ENCODE measurements at regions of chr10 and their contacts with region 1.

Region 1: DNA sequence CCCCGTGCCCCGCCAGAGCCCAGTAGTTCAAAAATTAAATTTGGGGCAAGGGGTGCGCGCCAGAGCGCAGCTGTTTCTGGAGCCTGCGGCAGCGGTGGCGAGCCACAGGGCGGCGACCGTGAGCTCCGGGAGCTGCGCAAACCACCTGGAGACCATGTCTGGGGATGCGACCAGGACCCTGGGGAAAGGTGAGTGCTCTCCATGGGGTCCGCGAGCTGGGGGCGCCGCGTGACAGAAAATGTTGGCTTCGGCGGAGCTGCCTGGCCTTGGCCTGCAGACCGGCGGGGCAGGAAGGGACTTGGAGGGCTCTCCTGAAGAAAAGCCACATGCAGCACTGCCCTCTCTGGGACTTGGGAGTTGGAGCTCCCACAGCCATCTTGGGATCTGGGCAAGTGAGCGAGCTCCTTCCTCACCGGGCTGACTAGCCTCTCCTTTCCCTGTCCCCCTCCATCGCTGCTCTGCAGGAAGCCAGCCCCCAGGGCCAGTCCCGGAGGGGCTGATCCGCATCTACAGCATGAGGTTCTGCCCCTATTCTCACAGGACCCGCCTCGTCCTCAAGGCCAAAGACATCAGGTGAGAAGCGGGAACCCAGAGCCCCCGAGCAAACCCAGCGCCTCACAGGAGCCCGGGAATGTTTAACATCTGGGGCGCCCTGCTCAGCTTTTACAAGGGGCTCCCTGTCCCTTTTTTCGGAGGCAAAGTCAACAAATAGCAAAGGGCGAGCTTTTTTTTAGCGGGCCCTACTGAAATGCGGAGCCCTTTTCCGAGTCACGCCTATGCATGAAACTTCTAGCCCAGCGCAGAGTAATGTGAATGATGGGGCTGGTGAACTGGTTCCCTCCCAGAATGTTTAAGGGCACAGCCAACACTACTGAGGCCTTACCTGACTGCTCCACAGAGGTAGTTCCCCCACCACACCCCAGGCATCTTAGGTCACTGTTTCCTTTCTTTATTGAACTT is 6.1 kb downstream of the GSTO2 start:
- DNase-seq: peak in 3 of 5 donors; percentile 36 to 43 (median 40)
- H3K4me3 ChIP-seq: no peak overlapping the region
- H3K4me3 Mint-ChIP-seq: peak overlapping the region in 6 of 8 donors; percentile 10 to 71 (median 54)
- H3K27ac ChIP-seq: no peak overlapping the region
- H3K27ac Mint-ChIP-seq: peak overlapping the region in 1 of 7 donors; percentile 35
- H3K4me1 ChIP-seq: peaks cover 11% of the 10 kb centered on the region
- H3K4me1 Mint-ChIP-seq: no peaks in the 10 kb centered on the region
- H3K27me3 ChIP-seq: no peaks in the 10 kb centered on the region
- H3K27me3 Mint-ChIP-seq: peaks cover 9 to 10% of the 10 kb centered on the region in 2 donors

Region 2: DNA sequence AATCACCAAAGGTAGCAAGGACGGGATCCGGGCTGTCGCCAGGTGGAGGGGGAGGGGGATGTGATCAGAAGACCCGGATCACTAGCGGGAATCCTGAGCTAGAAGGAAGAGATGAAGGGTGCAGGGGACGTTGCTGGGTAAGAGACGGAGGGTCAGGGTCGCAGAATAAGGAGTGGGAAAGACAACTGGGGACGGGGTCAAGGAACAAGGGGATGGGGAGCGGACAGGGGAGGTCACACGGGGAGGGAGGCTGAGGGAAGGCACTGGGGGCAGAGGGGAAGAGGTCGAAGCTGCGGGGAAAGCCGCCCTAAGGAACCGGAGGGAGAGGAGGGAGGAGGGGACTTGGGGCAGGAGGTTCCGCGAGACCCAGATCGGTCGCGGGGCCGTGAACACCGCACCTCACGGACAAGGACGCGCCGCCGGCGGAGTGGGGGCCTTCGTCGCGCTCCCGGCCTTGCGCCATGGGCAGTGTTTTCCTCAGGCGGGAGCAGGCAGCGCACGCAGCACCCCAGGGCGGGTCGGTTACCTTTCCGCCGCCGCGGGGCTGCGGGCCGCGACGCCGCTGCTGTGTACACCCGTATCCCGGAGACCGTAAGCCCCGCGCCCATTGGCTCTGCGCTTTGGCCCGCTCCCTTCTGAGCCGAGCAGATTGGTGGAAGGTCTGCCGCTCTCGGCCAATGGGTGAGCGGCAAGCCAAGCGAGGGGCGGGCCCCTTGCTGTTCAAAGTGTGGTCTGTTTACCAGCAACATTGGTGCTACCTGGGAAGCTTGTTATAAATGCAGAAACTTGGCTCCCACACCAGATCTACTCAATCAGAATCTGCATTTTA is 43.0 kb before region 1 on chr10 and contains the start of gene CFAP43:
- CTCF ChIA-PET with region 1: interaction called, 20 read pairs
- POLR2A ChIA-PET with region 1: no interaction called
- intact Hi-C with region 1: no loop called
- DNase-seq: peak; percentile 99 to 100 (median 99)
- H3K4me3 ChIP-seq: peak within 1 kb of the TSS; percentile 57 to 64
- H3K4me3 Mint-ChIP-seq: peak within 1 kb of the TSS; percentile 84 to 94 (median 90)
- H3K27ac ChIP-seq: peak within 1 kb of the TSS; percentile 49
- H3K27ac Mint-ChIP-seq: peak within 1 kb of the TSS; percentile 82 to 96 (median 92)
- H3K4me1 ChIP-seq: peaks cover 6% of the 10 kb centered on the region
- H3K4me1 Mint-ChIP-seq: peaks cover 6 to 19% (median 11%) of the 10 kb centered on the region in 4 donors
- H3K27me3 ChIP-seq: peaks cover 5% of the 10 kb centered on the region
- H3K27me3 Mint-ChIP-seq: peaks cover 9 to 17% of the 10 kb centered on the region in 2 donors
- total RNA-seq, gene CFAP43: not detected

Region 3: DNA sequence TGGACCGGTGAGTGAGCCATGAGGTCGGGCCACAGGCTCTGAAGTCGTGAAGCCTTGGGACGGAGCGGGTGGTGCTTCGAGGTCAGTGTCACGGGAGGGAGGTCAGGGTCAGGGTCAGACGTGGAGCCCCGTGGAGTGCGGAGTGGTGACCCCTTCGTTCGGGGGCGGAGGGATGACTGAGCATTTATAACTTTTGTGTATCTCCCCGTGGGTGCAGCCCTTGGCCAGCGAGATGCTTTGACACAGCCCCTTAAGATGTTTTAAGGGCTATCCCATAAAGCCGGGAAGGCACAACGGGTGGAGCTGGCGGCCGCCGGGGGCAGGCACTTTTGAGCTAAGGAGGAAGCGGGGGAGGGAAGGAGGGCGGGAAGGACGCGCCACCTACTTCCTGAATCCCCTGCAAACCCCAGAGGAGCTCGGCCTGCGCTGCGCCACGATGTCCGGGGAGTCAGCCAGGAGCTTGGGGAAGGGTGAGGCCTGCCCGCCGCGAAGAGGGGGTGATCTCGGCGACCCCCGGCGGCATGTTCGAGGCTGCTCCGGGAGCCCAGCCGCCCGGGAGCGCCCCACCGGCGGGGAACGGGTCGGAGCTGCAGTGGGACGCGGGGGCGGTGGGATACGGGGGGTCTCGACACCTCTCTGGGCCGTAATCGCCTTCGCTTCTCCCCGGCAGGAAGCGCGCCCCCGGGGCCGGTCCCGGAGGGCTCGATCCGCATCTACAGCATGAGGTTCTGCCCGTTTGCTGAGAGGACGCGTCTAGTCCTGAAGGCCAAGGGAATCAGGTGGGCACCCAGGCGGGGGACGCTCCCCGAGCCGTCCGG is 20.3 kb before region 1 on chr10 and contains the start of gene GSTO1:
- CTCF ChIA-PET with region 1: interaction called, 73 read pairs
- POLR2A ChIA-PET with region 1: interaction called, 59 read pairs
- intact Hi-C with region 1: no loop called
- DNase-seq: peak in 4 of 5 donors; percentile 22 to 62 (median 31)
- H3K4me3 ChIP-seq: peak within 1 kb of the TSS; percentile 45 to 56
- H3K4me3 Mint-ChIP-seq: peak within 1 kb of the TSS; percentile 84 to 99 (median 98)
- H3K27ac ChIP-seq: peak within 1 kb of the TSS; percentile 75
- H3K27ac Mint-ChIP-seq: peak within 1 kb of the TSS; percentile 82 to 98 (median 96)
- H3K4me1 ChIP-seq: peaks cover 46% of the 10 kb centered on the region
- H3K4me1 Mint-ChIP-seq: peaks cover 36 to 54% (median 44%) of the 10 kb centered on the region in 4 donors
- H3K27me3 ChIP-seq: no peaks in the 10 kb centered on the region
- H3K27me3 Mint-ChIP-seq: peaks cover 0 to 2% of the 10 kb centered on the region in 2 donors
- total RNA-seq, gene GSTO1: 52.8 to 54.7 TPM

Region 4: DNA sequence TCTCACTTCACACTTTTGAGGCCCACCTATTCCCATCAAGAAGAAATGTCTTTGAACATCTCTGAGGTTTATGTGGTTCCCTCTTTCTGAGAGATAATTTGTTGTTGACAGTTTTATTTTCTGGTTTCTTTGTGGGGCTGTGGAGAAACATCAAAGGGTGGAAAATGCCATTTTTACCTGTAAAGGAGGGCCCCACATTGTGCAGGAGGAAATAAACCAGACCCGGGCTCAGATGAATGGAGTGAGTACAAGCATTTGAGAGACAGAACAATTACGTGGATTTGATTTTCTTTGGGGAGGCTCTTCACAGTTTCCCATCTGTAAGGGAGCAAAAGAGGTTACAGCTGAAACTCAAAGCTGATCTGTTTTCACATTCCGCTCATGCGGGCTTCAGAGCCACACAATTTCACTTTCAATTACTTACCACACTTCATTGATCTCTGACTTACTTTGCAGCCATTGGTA is 33.4 kb after region 1 on chr10:
- CTCF ChIA-PET with region 1: interaction called, 33 read pairs
- POLR2A ChIA-PET with region 1: interaction called, 3 read pairs
- intact Hi-C with region 1: no loop called
- DNase-seq: peak; percentile 49 to 57 (median 51)
- H3K4me3 ChIP-seq: no peak overlapping the region
- H3K4me3 Mint-ChIP-seq: peak overlapping the region; percentile 8 to 84 (median 64)
- H3K27ac ChIP-seq: no peak overlapping the region
- H3K27ac Mint-ChIP-seq: peak overlapping the region; percentile 49 to 92 (median 82)
- H3K4me1 ChIP-seq: peaks cover 60% of the 10 kb centered on the region
- H3K4me1 Mint-ChIP-seq: peaks cover 42 to 82% (median 62%) of the 10 kb centered on the region in 4 donors
- H3K27me3 ChIP-seq: no peaks in the 10 kb centered on the region
- H3K27me3 Mint-ChIP-seq: no peaks in the 10 kb centered on the region

Region 5: GRCh38 chr10:104353325-104354048 is 78.4 kb after region 1 on chr10 and contains the start of gene CFAP58:
- CTCF ChIA-PET with region 1: interaction called, 55 read pairs
- POLR2A ChIA-PET with region 1: interaction called, 3 read pairs
- intact Hi-C with region 1: no loop called
- DNase-seq: peak; percentile 87 to 91 (median 88)
- H3K4me3 ChIP-seq: peak within 1 kb of the TSS; percentile 17 to 58
- H3K4me3 Mint-ChIP-seq: peak within 1 kb of the TSS in 3 of 8 donors; percentile 41 to 72 (median 61)
- H3K27ac ChIP-seq: peak within 1 kb of the TSS; percentile 18
- H3K27ac Mint-ChIP-seq: peak within 1 kb of the TSS in 4 of 7 donors; percentile 34 to 66 (median 46)
- H3K4me1 ChIP-seq: peaks cover 33% of the 10 kb centered on the region
- H3K4me1 Mint-ChIP-seq: peaks cover 0 to 19% (median 14%) of the 10 kb centered on the region in 4 donors
- H3K27me3 ChIP-seq: no peaks in the 10 kb centered on the region
- H3K27me3 Mint-ChIP-seq: no peaks in the 10 kb centered on the region
- total RNA-seq, gene CFAP58: not detected

Region 6: GRCh38 chr10:104680467-104681401 is 405.7 kb after region 1 on chr10:
- CTCF ChIA-PET with region 1: no interaction called
- POLR2A ChIA-PET with region 1: no interaction called
- intact Hi-C with region 1: no loop called
- DNase-seq: no peak
- H3K4me3 ChIP-seq: no peak overlapping the region
- H3K4me3 Mint-ChIP-seq: no peak overlapping the region
- H3K27ac ChIP-seq: no peak overlapping the region
- H3K27ac Mint-ChIP-seq: no peak overlapping the region
- H3K4me1 ChIP-seq: no peaks in the 10 kb centered on the region
- H3K4me1 Mint-ChIP-seq: no peaks in the 10 kb centered on the region
- H3K27me3 ChIP-seq: no peaks in the 10 kb centered on the region
- H3K27me3 Mint-ChIP-seq: peaks cover 14 to 21% of the 10 kb centered on the region in 2 donors

Region 7: DNA sequence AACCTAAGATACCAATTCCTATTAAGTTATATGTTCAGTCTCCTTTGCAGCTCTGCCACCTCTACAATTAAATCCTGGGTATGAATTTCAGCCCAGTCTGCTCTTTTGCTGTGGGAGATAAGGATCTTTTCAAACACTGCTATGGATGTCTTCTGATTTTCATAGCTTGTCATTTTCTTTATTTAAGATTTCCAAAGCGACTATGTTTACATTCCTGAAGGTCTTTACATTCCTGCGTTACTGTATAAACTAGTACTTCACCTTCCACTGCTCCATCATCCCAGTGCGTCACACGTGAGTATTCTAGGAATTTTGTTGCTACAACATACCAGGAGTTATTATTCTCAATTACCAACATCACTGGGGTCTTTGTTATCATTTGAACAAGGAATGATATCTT is 1310.7 kb after region 1 on chr10:
- CTCF ChIA-PET with region 1: no interaction called
- POLR2A ChIA-PET with region 1: no interaction called
- intact Hi-C with region 1: no loop called
- DNase-seq: no peak
- H3K4me3 ChIP-seq: no peak overlapping the region
- H3K4me3 Mint-ChIP-seq: no peak overlapping the region
- H3K27ac ChIP-seq: no peak overlapping the region
- H3K27ac Mint-ChIP-seq: no peak overlapping the region
- H3K4me1 ChIP-seq: no peaks in the 10 kb centered on the region
- H3K4me1 Mint-ChIP-seq: no peaks in the 10 kb centered on the region
- H3K27me3 ChIP-seq: no peaks in the 10 kb centered on the region
- H3K27me3 Mint-ChIP-seq: no peaks in the 10 kb centered on the region

Measured in CD4-positive, alpha-beta memory T cell (primary cell).